Mammary epithelial cell (primary cell): ENCODE measurements at regions of chr20 and their contacts with region 1.

Region 1: GRCh38 chr20:18276821-18277220 is 11.5 kb upstream of the ZNF133 start:
- DNase-seq: peak; percentile 73
- H3K4me3 ChIP-seq: no peak overlapping the region
- H3K27ac ChIP-seq: no peak overlapping the region
- H3K4me1 ChIP-seq: peaks cover 3% of the 10 kb centered on the region
- H3K27me3 ChIP-seq: no peaks in the 10 kb centered on the region
- CTCF ChIP-seq: peak; percentile 95 to 96

Region 2: DNA sequence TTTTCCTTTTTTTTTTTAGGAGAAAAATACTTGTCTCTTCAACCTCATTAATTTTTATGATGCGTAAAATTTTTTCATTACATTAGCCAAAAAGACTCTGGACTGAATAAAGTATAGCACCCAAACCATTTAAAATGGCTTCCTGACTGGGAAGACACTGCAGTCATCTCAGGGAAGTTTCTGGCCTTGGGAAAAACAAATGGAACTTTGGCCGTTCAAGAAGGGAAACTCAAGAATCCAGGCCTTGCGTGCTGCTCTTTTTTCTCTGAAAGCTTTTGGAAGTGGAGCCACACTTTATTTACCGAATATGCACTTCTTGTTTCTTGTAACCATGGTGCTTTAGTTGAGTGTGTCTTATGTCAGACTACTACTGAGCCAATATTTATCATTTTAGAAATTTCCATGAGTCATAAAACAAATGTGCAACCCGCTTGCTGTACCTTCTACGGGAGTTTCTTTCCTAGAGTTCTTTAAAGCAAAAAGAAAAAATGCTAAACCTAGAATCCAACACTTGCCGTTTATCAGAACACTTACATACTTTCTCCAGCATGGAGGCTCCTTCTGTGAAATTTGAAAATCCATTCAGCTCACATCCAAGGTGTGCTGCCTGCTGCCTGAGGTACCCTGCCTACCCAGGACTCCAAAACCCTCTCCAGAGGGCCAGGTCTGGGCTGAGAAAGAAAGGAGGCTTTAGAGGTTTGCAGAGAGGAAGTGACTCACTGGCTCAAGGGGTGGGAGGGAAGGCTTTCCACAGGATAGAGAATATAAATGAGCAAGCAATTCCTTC is 718.5 kb before region 1 on chr20:
- CTCF ChIA-PET with region 1: no interaction called
- dilution Hi-C with region 1: no loop called
- in situ Hi-C with region 1: no loop called
- intact Hi-C with region 1: no loop called
- DNase-seq: peak; percentile 88
- H3K4me3 ChIP-seq: peak overlapping the region; percentile 31 to 44 (median 37)
- H3K27ac ChIP-seq: peak overlapping the region; percentile 100
- H3K4me1 ChIP-seq: peaks cover 41% of the 10 kb centered on the region
- H3K27me3 ChIP-seq: no peaks in the 10 kb centered on the region
- CTCF ChIP-seq: no peak

Region 3: DNA sequence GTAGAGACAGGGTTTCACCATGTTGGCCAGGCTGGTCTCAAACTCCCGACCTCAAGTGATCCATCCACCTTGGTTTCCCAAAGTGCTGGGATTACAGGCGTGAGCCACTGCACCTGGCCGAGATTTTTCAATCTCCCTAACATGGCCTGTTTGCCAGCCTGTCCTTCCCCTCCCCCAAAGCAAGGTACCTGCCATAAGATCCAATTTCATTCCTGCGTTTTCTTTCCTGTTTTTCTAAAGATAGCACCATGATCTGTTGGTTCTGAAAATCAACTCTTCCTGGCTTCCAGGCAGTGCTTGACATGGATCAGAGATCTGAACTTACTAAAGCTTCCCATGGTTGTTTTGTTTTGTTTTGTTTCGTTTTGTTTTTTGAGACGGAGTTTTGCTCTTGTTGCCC is 300.5 kb before region 1 on chr20:
- CTCF ChIA-PET with region 1: no interaction called
- dilution Hi-C with region 1: loop called (anchors 5 kb)
- in situ Hi-C with region 1: loop called in 1 of 2 experiments (anchors 25 kb)
- intact Hi-C with region 1: no loop called
- DNase-seq: no peak
- H3K4me3 ChIP-seq: no peak overlapping the region
- H3K27ac ChIP-seq: no peak overlapping the region
- H3K4me1 ChIP-seq: peaks cover 7% of the 10 kb centered on the region
- H3K27me3 ChIP-seq: no peaks in the 10 kb centered on the region
- CTCF ChIP-seq: no peak

Region 4: GRCh38 chr20:18001131-18001921 is 275.5 kb before region 1 on chr20:
- CTCF ChIA-PET with region 1: no interaction called
- dilution Hi-C with region 1: no loop called
- in situ Hi-C with region 1: no loop called
- intact Hi-C with region 1: loop called (anchors 1 kb)
- DNase-seq: peak; percentile 97
- H3K4me3 ChIP-seq: no peak overlapping the region
- H3K27ac ChIP-seq: peak overlapping the region; percentile 66
- H3K4me1 ChIP-seq: peaks cover 18% of the 10 kb centered on the region
- H3K27me3 ChIP-seq: no peaks in the 10 kb centered on the region
- CTCF ChIP-seq: peak in 1 of 2 donors; percentile 32

Region 5: DNA sequence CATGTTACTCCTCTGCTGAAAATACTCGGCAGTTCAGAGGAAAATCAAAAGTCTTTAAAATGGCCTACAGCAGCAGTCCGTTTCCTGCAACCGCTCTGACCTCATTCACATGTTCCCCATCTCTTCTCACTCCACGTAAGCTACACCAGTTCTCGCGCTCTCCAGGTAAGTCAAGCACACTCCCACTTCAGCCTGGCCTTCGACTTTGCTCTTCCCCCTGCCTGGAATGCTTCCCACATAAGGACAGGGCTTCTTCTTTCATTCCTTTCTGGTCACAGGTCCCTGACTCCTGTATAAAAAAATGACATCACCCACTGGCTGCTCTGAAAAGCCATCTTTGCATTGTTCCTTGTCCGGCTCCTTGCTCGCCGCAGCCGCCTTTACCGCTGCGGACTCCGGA is 265.3 kb before region 1 on chr20:
- CTCF ChIA-PET with region 1: no interaction called
- dilution Hi-C with region 1: no loop called
- in situ Hi-C with region 1: no loop called
- intact Hi-C with region 1: no loop called
- DNase-seq: no peak
- H3K4me3 ChIP-seq: no peak overlapping the region
- H3K27ac ChIP-seq: no peak overlapping the region
- H3K4me1 ChIP-seq: no peaks in the 10 kb centered on the region
- H3K27me3 ChIP-seq: no peaks in the 10 kb centered on the region
- CTCF ChIP-seq: no peak

Region 6: DNA sequence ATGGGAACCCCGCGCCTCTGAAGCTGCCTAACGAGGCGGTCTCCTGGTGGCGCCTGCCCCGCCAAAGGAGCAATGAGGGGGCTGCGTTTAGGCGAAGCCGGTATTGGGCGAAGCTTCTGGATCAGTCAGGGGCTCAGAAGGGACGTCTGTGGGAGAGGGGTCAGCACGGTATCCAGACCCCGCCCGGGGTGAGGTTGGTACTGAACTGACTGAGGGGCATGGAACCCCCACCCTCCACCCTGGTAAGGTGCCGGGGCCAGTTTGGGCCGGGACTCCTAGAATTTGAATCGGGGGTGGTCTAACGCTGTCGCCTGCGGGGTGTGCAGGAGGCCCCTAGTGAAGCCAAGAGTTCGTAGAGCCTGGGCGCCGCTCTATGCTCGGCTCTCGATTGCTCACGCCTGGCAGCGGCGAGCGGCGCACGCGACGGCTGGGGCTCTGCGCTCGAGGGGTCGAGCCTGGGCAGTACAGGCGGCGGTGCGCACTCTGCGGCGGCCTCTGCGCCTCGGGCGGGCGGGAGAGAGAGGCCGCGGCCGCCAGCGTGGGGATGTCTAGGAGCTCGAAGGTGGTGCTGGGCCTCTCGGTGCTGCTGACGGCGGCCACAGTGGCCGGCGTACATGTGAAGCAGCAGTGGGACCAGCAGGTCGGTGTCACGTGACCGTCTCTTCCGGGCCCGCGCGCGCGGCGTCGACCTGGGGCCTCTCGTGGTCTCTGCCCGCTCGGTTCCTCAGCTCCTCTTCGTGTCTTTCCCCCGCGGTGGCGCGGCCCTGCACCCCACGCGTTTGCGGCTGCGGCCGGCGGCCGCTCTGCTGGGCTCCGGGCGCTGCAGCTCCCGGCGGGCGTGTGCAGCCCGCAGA is 139.2 kb before region 1 on chr20 and contains the starts of genes KAT14 and PET117:
- CTCF ChIA-PET with region 1: no interaction called
- dilution Hi-C with region 1: no loop called
- in situ Hi-C with region 1: no loop called
- intact Hi-C with region 1: loop called (anchors 1 kb)
- DNase-seq: peak; percentile 93
- H3K4me3 ChIP-seq: peak within 1 kb of the TSS; percentile 85 to 86 (median 86)
- H3K27ac ChIP-seq: peak within 1 kb of the TSS; percentile 75
- H3K4me1 ChIP-seq: peaks cover 21% of the 10 kb centered on the region
- H3K27me3 ChIP-seq: no peaks in the 10 kb centered on the region
- CTCF ChIP-seq: no peak
- total RNA-seq, gene KAT14: 18.5 to 20.2 TPM
- total RNA-seq, gene PET117: 10.8 to 13.2 TPM

Region 7: GRCh38 chr20:18252597-18253451 is 24.0 kb before region 1 on chr20:
- CTCF ChIA-PET with region 1: no interaction called
- dilution Hi-C with region 1: no loop called
- in situ Hi-C with region 1: no loop called
- intact Hi-C with region 1: loop called (anchors 2 kb)
- DNase-seq: peak; percentile 97
- H3K4me3 ChIP-seq: no peak overlapping the region
- H3K27ac ChIP-seq: peak overlapping the region; percentile 95
- H3K4me1 ChIP-seq: peaks cover 19% of the 10 kb centered on the region
- H3K27me3 ChIP-seq: no peaks in the 10 kb centered on the region
- CTCF ChIP-seq: no peak